ENCODE measurements at regions of chr3 and their contacts with region 1.

Region 1: GRCh38 chr3:9704347-9705322 is 1.0 kb downstream of the CPNE9 start:
- DNase-seq: no peak
- ATAC-seq: peak; percentile 79
- H3K4me3 ChIP-seq: peak overlapping the region; percentile 29 to 46
- H3K27ac ChIP-seq: no peak overlapping the region
- H3K4me1 ChIP-seq: no peaks in the 10 kb centered on the region
- H3K27me3 ChIP-seq: no peaks in the 10 kb centered on the region
- CTCF ChIP-seq: no peak

Region 2: DNA sequence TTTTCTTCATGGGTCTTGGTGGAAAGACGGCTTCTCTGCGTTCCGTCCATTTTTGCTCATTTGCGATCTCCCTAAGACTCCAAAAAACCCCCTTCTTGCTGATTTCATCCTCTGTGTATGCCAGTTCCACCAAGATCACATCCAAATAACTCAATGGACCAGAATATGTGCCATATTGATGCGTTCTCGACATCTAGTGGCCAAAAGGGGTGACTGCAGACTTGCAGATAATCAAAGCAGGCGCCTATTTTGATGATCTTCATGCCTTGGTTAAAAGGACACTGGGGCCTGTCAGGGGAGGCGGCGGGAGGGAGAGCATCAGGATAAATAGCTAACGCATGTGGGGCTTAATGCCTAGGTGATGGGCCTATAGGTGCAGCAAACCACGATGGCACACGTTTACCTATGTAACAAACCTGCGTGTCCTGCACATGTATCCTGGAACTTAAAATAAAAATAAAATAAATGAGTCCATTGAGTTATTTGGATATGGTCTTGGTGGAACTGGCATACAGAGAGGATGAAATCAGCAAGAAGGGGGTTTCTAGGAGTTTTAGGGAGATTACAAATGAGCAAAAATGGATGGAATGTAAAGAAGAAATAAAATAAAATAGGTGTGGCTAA is 637.2 kb before region 1 on chr3:
- CTCF ChIA-PET with region 1: no interaction called
- POLR2A ChIA-PET with region 1: no interaction called
- in situ Hi-C with region 1: no loop called
- intact Hi-C with region 1: no loop called
- DNase-seq: peak; percentile 45
- ATAC-seq: peak; percentile 86
- H3K4me3 ChIP-seq: no peak overlapping the region
- H3K27ac ChIP-seq: no peak overlapping the region
- H3K4me1 ChIP-seq: no peaks in the 10 kb centered on the region
- H3K27me3 ChIP-seq: no peaks in the 10 kb centered on the region; the same call in 1 of the 2 replicates
- CTCF ChIP-seq: peak; percentile 95

Region 3: GRCh38 chr3:9503283-9503682 is 201.4 kb before region 1 on chr3:
- CTCF ChIA-PET with region 1: no interaction called
- POLR2A ChIA-PET with region 1: no interaction called
- in situ Hi-C with region 1: no loop called
- intact Hi-C with region 1: loop called (anchors 5 kb)
- DNase-seq: peak; percentile 62
- ATAC-seq: peak; percentile 75
- H3K4me3 ChIP-seq: no peak overlapping the region
- H3K27ac ChIP-seq: no peak overlapping the region
- H3K4me1 ChIP-seq: no peaks in the 10 kb centered on the region
- H3K27me3 ChIP-seq: no peaks in the 10 kb centered on the region
- CTCF ChIP-seq: peak; percentile 89

Region 4: DNA sequence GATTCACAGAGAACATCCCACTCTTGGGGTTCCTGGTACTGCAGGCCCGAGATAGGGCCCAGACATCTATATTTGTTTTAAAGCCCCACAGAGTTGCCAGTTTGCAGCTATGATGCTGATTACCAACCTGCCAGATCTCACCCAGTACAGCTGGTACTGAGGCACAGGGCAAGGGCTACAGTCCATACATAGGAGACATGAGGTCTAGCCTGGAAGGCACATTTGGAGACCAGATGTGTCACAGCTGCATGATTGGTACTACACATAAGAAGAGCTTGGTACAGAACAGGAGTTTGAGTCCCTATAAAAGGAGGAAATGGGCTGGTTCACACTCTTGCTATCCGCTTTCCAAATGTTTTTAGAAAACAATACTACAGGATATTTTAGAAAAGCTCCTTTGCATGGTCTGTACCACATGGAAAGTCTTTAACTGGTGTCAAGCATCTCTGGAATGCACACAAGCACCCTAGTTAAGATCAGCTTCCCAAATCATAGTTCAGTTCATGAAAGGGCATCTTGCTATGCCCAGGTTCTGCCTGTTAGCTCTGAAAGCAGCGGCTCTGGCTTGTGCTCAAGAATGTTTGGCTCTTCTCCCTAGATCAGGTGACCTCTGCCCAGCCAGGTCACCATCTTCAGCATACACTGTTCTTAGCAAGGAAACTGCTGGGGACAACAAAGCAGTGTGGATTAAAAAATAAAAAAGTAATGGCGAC is 34.8 kb before region 1 on chr3:
- CTCF ChIA-PET with region 1: no interaction called
- POLR2A ChIA-PET with region 1: no interaction called
- in situ Hi-C with region 1: no loop called
- intact Hi-C with region 1: no loop called
- DNase-seq: no peak
- ATAC-seq: no peak
- H3K4me3 ChIP-seq: no peak overlapping the region
- H3K27ac ChIP-seq: no peak overlapping the region
- H3K4me1 ChIP-seq: no peaks in the 10 kb centered on the region
- H3K27me3 ChIP-seq: no peaks in the 10 kb centered on the region
- CTCF ChIP-seq: no peak

Region 5: GRCh38 chr3:9852549-9852948 is 147.9 kb after region 1 on chr3:
- CTCF ChIA-PET with region 1: no interaction called
- POLR2A ChIA-PET with region 1: no interaction called
- in situ Hi-C with region 1: no loop called
- intact Hi-C with region 1: no loop called
- DNase-seq: no peak
- ATAC-seq: no peak
- H3K4me3 ChIP-seq: no peak overlapping the region
- H3K27ac ChIP-seq: no peak overlapping the region
- H3K4me1 ChIP-seq: no peaks in the 10 kb centered on the region
- H3K27me3 ChIP-seq: no peaks in the 10 kb centered on the region
- CTCF ChIP-seq: no peak

Measured in Panc1 (cell line).